ENCODE measurements at regions of chr10 and their contacts with region 1.

Region 1: GRCh38 chr10:70197235-70197945 is 27.1 kb upstream of the SAR1A start:
- DNase-seq: no peak
- ATAC-seq: peak; percentile 42
- H3K4me3 ChIP-seq: no peak overlapping the region
- H3K4me3 Mint-ChIP-seq: no peak overlapping the region
- H3K27ac ChIP-seq: no peak overlapping the region
- H3K27ac Mint-ChIP-seq: peak overlapping the region in 4 of 9 donors; percentile 18 to 36 (median 32)
- H3K4me1 ChIP-seq: peaks cover 0 to 11% of the 10 kb centered on the region in 2 donors
- H3K4me1 Mint-ChIP-seq: peaks cover 0 to 27% (median 10%) of the 10 kb centered on the region in 7 donors
- H3K27me3 ChIP-seq: no peaks in the 10 kb centered on the region
- H3K27me3 Mint-ChIP-seq: no peaks in the 10 kb centered on the region

Region 2: DNA sequence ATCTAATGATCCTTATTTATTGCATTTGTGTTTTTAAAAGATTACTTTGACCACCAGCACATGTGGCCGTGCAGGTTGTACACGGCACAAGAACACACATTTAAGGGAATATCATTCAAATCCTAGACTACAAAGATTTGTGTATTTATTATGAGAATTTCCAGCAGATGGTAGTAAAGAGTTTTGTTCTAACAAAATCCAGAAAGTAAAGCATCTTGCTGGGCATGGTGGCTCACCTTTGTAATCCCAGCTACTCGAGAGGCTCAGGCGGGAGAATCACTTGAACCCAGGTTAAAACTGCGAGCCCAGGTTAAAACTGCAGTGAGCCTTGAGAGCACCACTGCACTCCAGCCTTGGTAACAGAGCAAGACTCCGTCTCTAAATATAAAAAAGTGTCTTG is 113.2 kb before region 1 on chr10:
- CTCF ChIA-PET with region 1: interaction called, 3 read pairs
- POLR2A ChIA-PET with region 1: no interaction called
- intact Hi-C with region 1: loop called in 1 of 2 experiments (anchors 2 kb)
- DNase-seq: peak in 5 of 9 donors; percentile 5 to 18 (median 9)
- ATAC-seq: no peak
- H3K4me3 ChIP-seq: no peak overlapping the region
- H3K4me3 Mint-ChIP-seq: no peak overlapping the region
- H3K27ac ChIP-seq: no peak overlapping the region
- H3K27ac Mint-ChIP-seq: no peak overlapping the region
- H3K4me1 ChIP-seq: no peaks in the 10 kb centered on the region
- H3K4me1 Mint-ChIP-seq: peaks cover 0 to under 1% (median 0%) of the 10 kb centered on the region in 7 donors
- H3K27me3 ChIP-seq: no peaks in the 10 kb centered on the region
- H3K27me3 Mint-ChIP-seq: peaks cover 0 to 12% (median 0%) of the 10 kb centered on the region in 5 donors

Region 3: DNA sequence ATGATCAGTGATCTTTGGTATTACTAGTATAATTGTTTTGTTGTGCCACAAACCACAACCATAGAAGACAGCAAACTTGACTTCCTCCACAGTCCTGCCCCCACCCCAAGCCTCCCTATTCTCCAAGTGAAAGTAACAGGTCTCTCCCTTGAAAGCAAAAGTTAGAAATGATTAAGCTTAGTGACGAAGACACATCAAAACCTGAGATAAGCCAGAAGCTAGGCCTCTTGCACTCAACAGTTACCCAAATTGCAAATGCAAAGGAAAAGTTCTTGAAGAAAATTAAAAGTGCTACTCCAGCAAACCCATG is 34.5 kb before region 1 on chr10:
- CTCF ChIA-PET with region 1: interaction called, 3 read pairs
- POLR2A ChIA-PET with region 1: no interaction called
- intact Hi-C with region 1: loop called (anchors 5 kb)
- DNase-seq: peak in 6 of 9 donors; percentile 27 to 53 (median 43)
- ATAC-seq: peak; percentile 84
- H3K4me3 ChIP-seq: no peak overlapping the region
- H3K4me3 Mint-ChIP-seq: peak overlapping the region; percentile 12 to 96 (median 78)
- H3K27ac ChIP-seq: peak overlapping the region; percentile 50
- H3K27ac Mint-ChIP-seq: peak overlapping the region; percentile 33 to 90 (median 81)
- H3K4me1 ChIP-seq: peaks cover 52 to 53% of the 10 kb centered on the region in 2 donors
- H3K4me1 Mint-ChIP-seq: peaks cover 47 to 83% (median 76%) of the 10 kb centered on the region in 7 donors
- H3K27me3 ChIP-seq: no peaks in the 10 kb centered on the region
- H3K27me3 Mint-ChIP-seq: no peaks in the 10 kb centered on the region

Region 4: DNA sequence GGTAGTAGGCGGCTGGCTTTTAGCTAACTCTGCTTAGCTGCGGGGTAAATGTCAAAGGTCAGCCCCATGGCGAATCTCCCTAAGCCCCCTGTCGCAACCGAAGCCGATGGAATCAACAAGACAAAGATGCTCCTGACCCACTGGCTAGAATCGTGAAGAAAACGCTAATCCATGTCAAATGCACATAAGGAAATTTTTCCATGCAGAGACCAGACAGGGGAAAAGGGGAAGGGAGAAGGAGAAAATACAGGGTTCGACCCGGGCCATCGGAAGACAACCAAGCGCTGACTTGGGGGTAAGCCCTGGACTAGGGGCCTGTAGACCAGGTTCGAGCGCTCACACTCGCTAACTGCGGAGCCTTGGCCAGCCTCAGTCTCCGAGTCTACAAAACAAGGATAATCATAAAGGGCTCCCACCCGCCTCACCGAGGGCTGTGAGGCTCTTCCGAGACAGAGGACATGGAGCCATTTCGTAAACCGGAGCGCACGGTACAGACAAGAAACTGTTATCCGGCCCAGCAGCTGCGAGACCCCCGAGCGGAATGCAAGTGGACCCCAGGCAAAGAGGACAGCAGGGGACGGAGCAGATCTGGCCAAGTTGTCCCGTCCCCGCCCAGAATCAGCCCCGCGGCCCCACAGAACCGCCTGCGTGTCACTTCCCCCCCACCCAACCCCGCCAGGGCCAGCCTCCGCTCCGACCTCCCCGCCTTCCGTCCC is 27.6 kb before region 1 on chr10:
- CTCF ChIA-PET with region 1: no interaction called
- POLR2A ChIA-PET with region 1: no interaction called
- intact Hi-C with region 1: loop called in 1 of 2 experiments (anchors 5 kb)
- DNase-seq: peak in 2 of 9 donors; percentile 8 to 30
- ATAC-seq: peak; percentile 18
- H3K4me3 ChIP-seq: peak overlapping the region; percentile 88
- H3K4me3 Mint-ChIP-seq: peak overlapping the region; percentile 86 to 97 (median 94)
- H3K27ac ChIP-seq: peak overlapping the region; percentile 95
- H3K27ac Mint-ChIP-seq: peak overlapping the region; percentile 83 to 98 (median 96)
- H3K4me1 ChIP-seq: peaks cover 47 to 49% of the 10 kb centered on the region in 2 donors
- H3K4me1 Mint-ChIP-seq: peaks cover 46 to 70% (median 65%) of the 10 kb centered on the region in 7 donors
- H3K27me3 ChIP-seq: no peaks in the 10 kb centered on the region
- H3K27me3 Mint-ChIP-seq: no peaks in the 10 kb centered on the region

Region 5: GRCh38 chr10:70404036-70404786 is 206.8 kb after region 1 on chr10 and contains the start of gene EIF4EBP2:
- CTCF ChIA-PET with region 1: no interaction called
- POLR2A ChIA-PET with region 1: no interaction called
- intact Hi-C with region 1: no loop called
- DNase-seq: peak; percentile 95 to 100 (median 98)
- ATAC-seq: peak; percentile 98
- H3K4me3 ChIP-seq: peak within 1 kb of the TSS; percentile 82
- H3K4me3 Mint-ChIP-seq: peak within 1 kb of the TSS; percentile 91 to 99 (median 96)
- H3K27ac ChIP-seq: peak within 1 kb of the TSS; percentile 86
- H3K27ac Mint-ChIP-seq: peak within 1 kb of the TSS; percentile 88 to 97 (median 94)
- H3K4me1 ChIP-seq: peaks cover 13 to 24% of the 10 kb centered on the region in 2 donors
- H3K4me1 Mint-ChIP-seq: peaks cover 30 to 53% (median 44%) of the 10 kb centered on the region in 7 donors
- H3K27me3 ChIP-seq: no peaks in the 10 kb centered on the region
- H3K27me3 Mint-ChIP-seq: peaks cover 0 to 3% (median 0%) of the 10 kb centered on the region in 5 donors
- total RNA-seq, gene EIF4EBP2: 33.5 to 52.1 (median 45.2) TPM

Measured in naive thymus-derived CD4-positive, alpha-beta T cell (primary cell).